ENCODE measurements at regions of chr16 and their contacts with region 1.

Region 1: GRCh38 chr16:85688586-85689284 is at the start of gene GINS2:
- DNase-seq: peak; percentile 78
- ATAC-seq: peak; percentile 100
- H3K4me3 Mint-ChIP-seq: peak within 1 kb of the TSS; percentile 78
- H3K27ac Mint-ChIP-seq: no peak within 1 kb of the TSS
- H3K4me1 Mint-ChIP-seq: peaks cover 24% of the 10 kb centered on the region
- H3K27me3 Mint-ChIP-seq: no peaks in the 10 kb centered on the region
- CTCF ChIP-seq: no peak
- total RNA-seq, gene GINS2: 6.0 and 6.8 TPM in 2 replicates

Region 2: DNA sequence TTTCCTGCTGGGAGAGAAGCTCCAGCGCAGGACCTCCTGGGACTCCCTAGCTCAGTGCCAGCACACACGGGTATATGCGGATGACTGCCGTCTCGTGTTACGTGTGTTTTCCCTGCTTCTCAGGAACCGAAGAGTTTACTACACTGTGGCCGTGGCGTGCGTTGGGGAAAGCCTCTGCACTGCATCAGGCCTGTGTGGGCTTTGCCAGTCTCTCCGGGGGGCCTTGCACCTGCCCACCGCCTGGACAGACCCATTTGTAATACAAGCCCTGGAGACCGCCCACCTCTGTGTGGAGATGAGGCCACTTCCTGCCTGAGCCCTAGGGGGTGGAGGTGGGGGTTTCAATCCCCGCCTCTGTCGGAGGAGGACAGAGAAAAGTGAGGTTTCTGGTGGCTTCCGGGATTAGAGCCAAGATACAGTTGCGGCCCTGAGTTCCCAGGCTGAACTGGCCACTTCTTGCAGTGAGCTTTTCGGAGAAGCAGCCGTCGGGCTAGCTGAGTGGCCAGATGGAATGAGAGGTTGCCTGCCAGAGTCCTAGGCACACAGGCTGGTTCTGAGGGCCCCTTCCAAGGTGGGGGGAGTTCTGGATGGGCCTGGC is 119.0 kb before region 1 on chr16:
- CTCF ChIA-PET with region 1: no interaction called
- POLR2A ChIA-PET with region 1: no interaction called
- intact Hi-C with region 1: no loop called
- DNase-seq: no peak
- ATAC-seq: peak; percentile 53
- H3K4me3 Mint-ChIP-seq: peak overlapping the region; percentile 70
- H3K27ac Mint-ChIP-seq: peak overlapping the region; percentile 82
- H3K4me1 Mint-ChIP-seq: peaks cover 74% of the 10 kb centered on the region
- H3K27me3 Mint-ChIP-seq: no peaks in the 10 kb centered on the region
- CTCF ChIP-seq: no peak

Region 3: GRCh38 chr16:85785927-85786326 is 97.2 kb after region 1 on chr16:
- CTCF ChIA-PET with region 1: no interaction called
- POLR2A ChIA-PET with region 1: no interaction called
- intact Hi-C with region 1: no loop called
- DNase-seq: no peak
- ATAC-seq: no peak
- H3K4me3 Mint-ChIP-seq: no peak overlapping the region
- H3K27ac Mint-ChIP-seq: no peak overlapping the region
- H3K4me1 Mint-ChIP-seq: peaks cover 16% of the 10 kb centered on the region
- H3K27me3 Mint-ChIP-seq: no peaks in the 10 kb centered on the region
- CTCF ChIP-seq: no peak

Region 4: GRCh38 chr16:85799497-85800337 is 111.0 kb after region 1 on chr16 and contains the starts of genes COX4I1 and EMC8:
- CTCF ChIA-PET with region 1: no interaction called
- POLR2A ChIA-PET with region 1: no interaction called
- intact Hi-C with region 1: loop called (anchors 1 kb)
- DNase-seq: peak; percentile 89
- ATAC-seq: peak; percentile 89
- H3K4me3 Mint-ChIP-seq: peak within 1 kb of the TSS; percentile 90
- H3K27ac Mint-ChIP-seq: peak within 1 kb of the TSS; percentile 84
- H3K4me1 Mint-ChIP-seq: peaks cover 53% of the 10 kb centered on the region
- H3K27me3 Mint-ChIP-seq: no peaks in the 10 kb centered on the region
- CTCF ChIP-seq: no peak
- total RNA-seq, gene COX4I1: 578 TPM in 2 replicates
- total RNA-seq, gene EMC8: 27.8 and 29.0 TPM in 2 replicates

Region 5: DNA sequence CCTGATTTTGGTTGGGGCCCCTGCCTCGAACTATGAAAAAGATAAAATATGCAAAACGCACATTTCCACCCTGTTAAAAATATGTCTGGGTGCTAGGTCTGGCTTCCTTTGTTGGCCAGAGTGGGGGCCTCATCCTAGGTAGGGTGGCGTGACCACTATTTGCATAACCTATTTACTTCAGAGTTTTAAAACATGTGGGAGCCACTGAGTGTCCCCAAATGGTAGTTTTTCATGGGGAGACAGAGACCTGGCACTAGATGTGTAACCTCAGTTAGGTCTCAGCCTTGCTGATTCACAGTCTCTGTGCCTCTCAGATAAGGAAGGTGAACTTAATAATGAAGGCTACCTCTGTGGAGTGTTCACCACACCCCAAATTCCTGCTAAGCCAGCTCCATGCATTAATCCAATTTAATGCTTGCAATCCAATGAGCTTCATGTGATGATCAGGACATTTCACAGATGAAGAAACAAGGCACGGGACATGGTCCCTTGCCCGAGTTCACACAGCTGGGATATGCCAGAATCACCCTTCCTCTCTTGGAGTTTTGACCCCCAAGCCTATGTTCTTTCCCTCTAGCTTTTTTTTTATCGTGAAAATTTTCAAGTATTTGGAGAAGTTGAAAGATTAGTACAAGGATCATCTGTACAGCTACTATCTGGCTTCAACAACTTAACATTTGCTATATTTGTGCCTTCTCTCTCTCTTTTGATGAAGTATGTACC is 313.6 kb after region 1 on chr16:
- CTCF ChIA-PET with region 1: no interaction called
- POLR2A ChIA-PET with region 1: interaction called, 11 read pairs
- intact Hi-C with region 1: no loop called
- DNase-seq: peak; percentile 5
- ATAC-seq: peak; percentile 60
- H3K4me3 Mint-ChIP-seq: no peak overlapping the region
- H3K27ac Mint-ChIP-seq: peak overlapping the region; percentile 77
- H3K4me1 Mint-ChIP-seq: peaks cover 61% of the 10 kb centered on the region
- H3K27me3 Mint-ChIP-seq: no peaks in the 10 kb centered on the region
- CTCF ChIP-seq: no peak

Region 6: GRCh38 chr16:87316923-87317749 is 1628.4 kb after region 1 on chr16 and contains the start of gene C16orf95:
- CTCF ChIA-PET with region 1: no interaction called
- POLR2A ChIA-PET with region 1: no interaction called
- intact Hi-C with region 1: loop called (anchors 5 kb)
- DNase-seq: peak; percentile 95
- ATAC-seq: peak; percentile 91
- H3K4me3 Mint-ChIP-seq: peak within 1 kb of the TSS; percentile 94
- H3K27ac Mint-ChIP-seq: peak within 1 kb of the TSS; percentile 96
- H3K4me1 Mint-ChIP-seq: peaks cover 13% of the 10 kb centered on the region
- H3K27me3 Mint-ChIP-seq: no peaks in the 10 kb centered on the region
- CTCF ChIP-seq: no peak
- total RNA-seq, gene C16orf95: 1.7 and 2.1 TPM in 2 replicates

Measured in activated B cell treated with CpG ODN at 0.5 μM for 24 hours (primary cell).